Ovary (tissue), 10 donors: ENCODE measurements at regions of chr10 and their contacts with region 1.

Region 1: DNA sequence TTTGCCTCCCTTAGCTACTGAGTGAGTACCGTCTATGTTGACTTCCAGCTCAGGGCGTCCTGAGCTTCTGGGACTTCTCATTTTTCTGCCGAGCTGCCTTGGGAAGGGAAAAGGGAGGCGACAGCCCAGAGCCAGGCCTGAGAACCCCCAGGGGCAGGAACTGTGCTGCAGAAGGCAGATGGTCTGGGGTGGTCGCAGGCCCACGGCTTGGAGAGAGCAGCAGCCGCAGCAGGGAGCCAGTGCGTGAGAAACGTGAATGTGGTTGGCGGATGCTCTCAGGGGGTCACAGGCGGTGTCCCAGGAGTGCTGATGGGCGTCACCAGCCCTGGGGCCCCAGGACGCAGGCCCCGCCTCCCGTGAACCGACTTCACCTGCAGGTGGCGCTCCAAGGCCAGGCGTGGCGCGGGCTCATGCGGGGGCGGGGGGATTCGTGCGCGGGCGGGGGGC is 9.2 kb upstream of the PWWP2B start:
- DNase-seq: peak; percentile 79 to 90 (median 88)
- H3K4me3 ChIP-seq: no peak overlapping the region
- H3K27ac ChIP-seq: peak overlapping the region; percentile 37 to 64
- H3K4me1 ChIP-seq: peaks cover 13% of the 10 kb centered on the region
- H3K27me3 ChIP-seq: no peaks in the 10 kb centered on the region
- CTCF ChIP-seq: peak; percentile 47 to 82 (median 65)
- EP300 ChIP-seq: no peak
- POLR2A ChIP-seq: no peak

Region 2: GRCh38 chr10:132237871-132238270 is 149.9 kb before region 1 on chr10:
- intact Hi-C with region 1: no loop called
- DNase-seq: peak in 3 of 5 donors; percentile 28 to 61 (median 54)
- H3K4me3 ChIP-seq: no peak overlapping the region
- H3K27ac ChIP-seq: no peak overlapping the region
- H3K4me1 ChIP-seq: peaks cover 4% of the 10 kb centered on the region
- H3K27me3 ChIP-seq: no peaks in the 10 kb centered on the region
- CTCF ChIP-seq: no peak
- EP300 ChIP-seq: no peak
- POLR2A ChIP-seq: no peak

Region 3: GRCh38 chr10:132360766-132361447 is 26.9 kb before region 1 on chr10:
- intact Hi-C with region 1: no loop called
- DNase-seq: peak in 1 of 5 donors; percentile 53
- H3K4me3 ChIP-seq: no peak overlapping the region
- H3K27ac ChIP-seq: no peak overlapping the region
- H3K4me1 ChIP-seq: no peaks in the 10 kb centered on the region
- H3K27me3 ChIP-seq: no peaks in the 10 kb centered on the region
- CTCF ChIP-seq: no peak
- EP300 ChIP-seq: no peak
- POLR2A ChIP-seq: no peak

Region 4: GRCh38 chr10:132458593-132459300 is 71.0 kb after region 1 on chr10:
- intact Hi-C with region 1: loop called in 3 of 4 experiments (anchors 2 to 5 kb)
- DNase-seq: peak; percentile 53 to 82 (median 76)
- H3K4me3 ChIP-seq: no peak overlapping the region
- H3K27ac ChIP-seq: no peak overlapping the region
- H3K4me1 ChIP-seq: peaks cover 3% of the 10 kb centered on the region
- H3K27me3 ChIP-seq: no peaks in the 10 kb centered on the region
- CTCF ChIP-seq: peak; percentile 94 to 98 (median 96)
- EP300 ChIP-seq: no peak
- POLR2A ChIP-seq: peak; percentile 32

Region 5: GRCh38 chr10:132637477-132638129 is 249.8 kb after region 1 on chr10:
- intact Hi-C with region 1: loop called in 3 of 4 experiments (anchors 5 to 10 kb)
- DNase-seq: peak in 4 of 5 donors; percentile 24 to 36 (median 32)
- H3K4me3 ChIP-seq: no peak overlapping the region
- H3K27ac ChIP-seq: no peak overlapping the region
- H3K4me1 ChIP-seq: peaks cover 6% of the 10 kb centered on the region
- H3K27me3 ChIP-seq: no peaks in the 10 kb centered on the region
- CTCF ChIP-seq: peak; percentile 35 to 82 (median 76)
- EP300 ChIP-seq: no peak
- POLR2A ChIP-seq: no peak